ENCODE measurements at regions of chr5 and their contacts with region 1.

Region 1: GRCh38 chr5:64811050-64811640 is 42.4 kb downstream of the CWC27 start:
- DNase-seq: peak; percentile 45
- H3K4me3 Mint-ChIP-seq: no peak overlapping the region
- H3K27ac Mint-ChIP-seq: no peak overlapping the region
- H3K4me1 Mint-ChIP-seq: peaks cover 8% of the 10 kb centered on the region
- H3K27me3 Mint-ChIP-seq: no peaks in the 10 kb centered on the region
- CTCF ChIP-seq: peak; percentile 71

Region 2: GRCh38 chr5:65021527-65022226 is 210.5 kb after region 1 on chr5:
- CTCF ChIA-PET with region 1: no interaction called
- POLR2A ChIA-PET with region 1: no interaction called
- intact Hi-C with region 1: no loop called
- DNase-seq: no peak
- H3K4me3 Mint-ChIP-seq: no peak overlapping the region
- H3K27ac Mint-ChIP-seq: no peak overlapping the region
- H3K4me1 Mint-ChIP-seq: no peaks in the 10 kb centered on the region
- H3K27me3 Mint-ChIP-seq: no peaks in the 10 kb centered on the region
- CTCF ChIP-seq: no peak

Region 3: GRCh38 chr5:65102828-65103711 is 291.9 kb after region 1 on chr5:
- CTCF ChIA-PET with region 1: interaction called, 3 read pairs
- POLR2A ChIA-PET with region 1: no interaction called
- intact Hi-C with region 1: loop called (anchors 5 kb)
- DNase-seq: peak; percentile 42
- H3K4me3 Mint-ChIP-seq: peak overlapping the region; percentile 48
- H3K27ac Mint-ChIP-seq: no peak overlapping the region
- H3K4me1 Mint-ChIP-seq: peaks cover 12% of the 10 kb centered on the region
- H3K27me3 Mint-ChIP-seq: no peaks in the 10 kb centered on the region
- CTCF ChIP-seq: peak; percentile 9

Measured in MCF 10A (cell line).